ENCODE measurements at regions of chr12 and their contacts with region 1.

Region 1: GRCh38 chr12:32455607-32456071 is 56.3 kb downstream of the FGD4 start:
- ATAC-seq: peak in 5 of 8 experiments; percentile 39 to 69 (median 49)
- H3K4me3 ChIP-seq: peak overlapping the region in 2 of 5 donors; percentile 1 to 7
- H3K27ac ChIP-seq: peak overlapping the region in 1 of 2 donors; percentile 60
- H3K4me1 ChIP-seq: peaks cover 9 to 16% of the 10 kb centered on the region in 2 donors

Region 2: GRCh38 chr12:32659908-32660440 is 204.3 kb after region 1 on chr12:
- in situ Hi-C with region 1: loop called in 3 of 9 experiments (anchors 5 to 10 kb)
- ATAC-seq: no peak
- H3K4me3 ChIP-seq: no peak overlapping the region
- H3K27ac ChIP-seq: no peak overlapping the region
- H3K4me1 ChIP-seq: no peaks in the 10 kb centered on the region

Measured in motor neuron (in vitro differentiated cells).